Activated CD8-positive, alpha-beta T cell treated with anti-CD3 and anti-CD28 coated beads for 36 hours (primary cell): ENCODE measurements at regions of chr12 and their contacts with region 1.

Region 1: GRCh38 chr12:52327052-52327829 is 6.0 kb upstream of the KRT83 start:
- DNase-seq: peak; percentile 87
- ATAC-seq: peak; percentile 98
- H3K4me3 Mint-ChIP-seq: no peak overlapping the region
- H3K27ac Mint-ChIP-seq: no peak overlapping the region
- H3K4me1 Mint-ChIP-seq: peaks cover 12% of the 10 kb centered on the region
- H3K27me3 Mint-ChIP-seq: peaks cover 6% of the 10 kb centered on the region
- CTCF ChIP-seq: peak; percentile 53

Region 2: GRCh38 chr12:51923501-51924271 is 403.6 kb before region 1 on chr12:
- CTCF ChIA-PET with region 1: no interaction called
- POLR2A ChIA-PET with region 1: no interaction called
- intact Hi-C with region 1: no loop called
- DNase-seq: peak; percentile 73
- ATAC-seq: peak; percentile 89
- H3K4me3 Mint-ChIP-seq: no peak overlapping the region
- H3K27ac Mint-ChIP-seq: no peak overlapping the region
- H3K4me1 Mint-ChIP-seq: peaks cover 6% of the 10 kb centered on the region
- H3K27me3 Mint-ChIP-seq: no peaks in the 10 kb centered on the region
- CTCF ChIP-seq: peak; percentile 91

Region 3: GRCh38 chr12:52156736-52157565 is 170.3 kb before region 1 on chr12:
- CTCF ChIA-PET with region 1: interaction called, 36 read pairs
- POLR2A ChIA-PET with region 1: no interaction called
- intact Hi-C with region 1: loop called (anchors 5 kb)
- DNase-seq: peak; percentile 81
- ATAC-seq: peak; percentile 64
- H3K4me3 Mint-ChIP-seq: no peak overlapping the region
- H3K27ac Mint-ChIP-seq: no peak overlapping the region
- H3K4me1 Mint-ChIP-seq: peaks cover 17% of the 10 kb centered on the region
- H3K27me3 Mint-ChIP-seq: no peaks in the 10 kb centered on the region
- CTCF ChIP-seq: peak; percentile 97

Region 4: GRCh38 chr12:52202361-52203074 is 124.7 kb before region 1 on chr12:
- CTCF ChIA-PET with region 1: no interaction called
- POLR2A ChIA-PET with region 1: no interaction called
- intact Hi-C with region 1: no loop called
- DNase-seq: peak; percentile 6
- ATAC-seq: peak; percentile 41
- H3K4me3 Mint-ChIP-seq: no peak overlapping the region
- H3K27ac Mint-ChIP-seq: no peak overlapping the region
- H3K4me1 Mint-ChIP-seq: peaks cover 6% of the 10 kb centered on the region
- H3K27me3 Mint-ChIP-seq: peaks cover 8% of the 10 kb centered on the region
- CTCF ChIP-seq: no peak

Region 5: DNA sequence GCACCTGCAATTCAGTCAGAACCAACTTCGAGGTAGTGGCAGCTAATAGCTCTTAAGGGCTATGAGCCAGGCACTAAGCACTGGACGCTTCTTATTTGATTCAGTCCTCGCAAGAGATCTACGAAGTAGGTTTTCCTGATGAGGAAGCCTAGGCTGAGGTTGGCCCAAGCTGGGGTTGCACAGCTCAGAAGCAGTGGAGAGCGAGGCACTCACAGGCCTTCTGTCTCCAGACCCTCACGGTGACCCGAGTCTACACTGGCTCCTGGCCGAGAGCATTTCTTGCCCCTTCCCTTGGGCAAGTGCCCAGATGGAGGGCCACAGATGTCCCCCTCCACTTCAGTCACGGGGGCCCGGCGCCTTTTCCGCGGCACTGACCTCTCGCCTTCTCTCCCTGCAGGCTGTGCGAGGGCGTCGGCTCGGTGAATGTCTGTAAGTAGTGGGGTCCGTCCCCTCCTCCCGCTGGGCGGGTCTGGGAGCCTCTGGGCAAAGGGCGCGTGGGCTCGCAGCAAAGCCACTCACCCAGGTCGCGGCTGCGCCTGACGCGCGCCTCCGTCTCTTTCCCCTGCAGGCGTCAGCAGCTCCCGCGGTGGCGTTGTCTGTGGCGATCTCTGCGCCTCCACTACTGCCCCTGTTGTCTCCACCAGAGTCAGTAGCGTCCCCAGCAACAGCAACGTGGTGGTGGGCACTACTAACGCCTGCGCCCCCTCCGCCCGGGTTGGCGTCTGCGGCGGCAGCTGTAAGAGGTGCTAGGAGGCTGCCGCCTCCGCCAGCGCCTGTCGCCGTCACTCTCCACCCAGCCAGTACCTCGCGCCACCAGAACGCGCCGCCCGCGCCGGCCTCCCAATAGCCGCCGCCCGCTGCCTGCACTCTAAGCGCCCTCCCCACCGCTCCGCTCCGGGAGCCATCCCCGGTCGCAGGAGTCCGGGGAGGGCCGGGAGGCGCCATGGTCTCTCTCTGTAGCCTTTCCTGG is 19.1 kb before region 1 on chr12:
- CTCF ChIA-PET with region 1: interaction called, 28 read pairs
- POLR2A ChIA-PET with region 1: no interaction called
- intact Hi-C with region 1: no loop called
- DNase-seq: peak; percentile 67
- ATAC-seq: peak; percentile 88
- H3K4me3 Mint-ChIP-seq: peak overlapping the region; percentile 22
- H3K27ac Mint-ChIP-seq: no peak overlapping the region
- H3K4me1 Mint-ChIP-seq: peaks cover 15% of the 10 kb centered on the region
- H3K27me3 Mint-ChIP-seq: peaks cover 54% of the 10 kb centered on the region
- CTCF ChIP-seq: peak; percentile 25

Region 6: GRCh38 chr12:52314511-52314910 is 12.7 kb before region 1 on chr12:
- CTCF ChIA-PET with region 1: interaction called, 28 read pairs
- POLR2A ChIA-PET with region 1: no interaction called
- intact Hi-C with region 1: no loop called
- DNase-seq: no peak
- ATAC-seq: no peak
- H3K4me3 Mint-ChIP-seq: no peak overlapping the region
- H3K27ac Mint-ChIP-seq: no peak overlapping the region
- H3K4me1 Mint-ChIP-seq: no peaks in the 10 kb centered on the region
- H3K27me3 Mint-ChIP-seq: peaks cover 21% of the 10 kb centered on the region
- CTCF ChIP-seq: no peak

Region 7: DNA sequence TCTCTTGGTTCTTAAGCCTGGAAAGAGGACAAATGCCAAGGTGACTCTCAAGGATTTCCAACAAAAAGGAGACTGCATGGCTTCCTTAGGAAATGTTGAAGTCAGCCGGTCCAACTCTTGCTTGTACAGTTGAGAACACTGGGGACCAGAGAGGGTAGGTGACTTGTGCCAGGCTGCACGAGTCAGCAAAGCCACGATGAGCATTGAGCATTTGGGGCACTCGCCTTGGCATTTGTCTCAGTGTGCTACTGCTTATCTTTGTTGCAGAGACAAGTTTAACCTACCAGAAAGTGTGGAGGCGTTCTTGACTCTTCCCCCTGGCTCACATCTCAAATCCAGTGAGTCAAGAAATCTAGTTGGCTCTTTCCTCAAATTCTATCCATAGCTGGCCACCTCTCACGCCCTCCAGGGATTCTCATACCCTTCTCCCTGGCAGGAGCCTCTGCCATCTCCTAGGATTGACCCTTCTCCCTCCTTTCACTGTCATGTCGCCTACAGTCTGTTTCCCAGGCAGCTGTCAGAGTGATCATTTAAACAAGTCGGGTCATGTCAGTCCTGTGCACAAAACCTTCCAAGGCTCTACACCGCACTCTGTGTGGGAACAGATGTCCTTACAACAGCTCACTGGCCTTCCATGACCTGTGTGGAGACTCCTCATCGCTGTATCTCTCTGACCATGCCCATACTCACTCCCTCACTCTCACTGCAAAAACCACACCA is 11.2 kb after region 1 on chr12:
- CTCF ChIA-PET with region 1: interaction called, 14 read pairs
- POLR2A ChIA-PET with region 1: no interaction called
- intact Hi-C with region 1: no loop called
- DNase-seq: no peak
- ATAC-seq: no peak
- H3K4me3 Mint-ChIP-seq: no peak overlapping the region
- H3K27ac Mint-ChIP-seq: no peak overlapping the region
- H3K4me1 Mint-ChIP-seq: peaks cover 8% of the 10 kb centered on the region
- H3K27me3 Mint-ChIP-seq: peaks cover 4% of the 10 kb centered on the region
- CTCF ChIP-seq: no peak

Region 8: DNA sequence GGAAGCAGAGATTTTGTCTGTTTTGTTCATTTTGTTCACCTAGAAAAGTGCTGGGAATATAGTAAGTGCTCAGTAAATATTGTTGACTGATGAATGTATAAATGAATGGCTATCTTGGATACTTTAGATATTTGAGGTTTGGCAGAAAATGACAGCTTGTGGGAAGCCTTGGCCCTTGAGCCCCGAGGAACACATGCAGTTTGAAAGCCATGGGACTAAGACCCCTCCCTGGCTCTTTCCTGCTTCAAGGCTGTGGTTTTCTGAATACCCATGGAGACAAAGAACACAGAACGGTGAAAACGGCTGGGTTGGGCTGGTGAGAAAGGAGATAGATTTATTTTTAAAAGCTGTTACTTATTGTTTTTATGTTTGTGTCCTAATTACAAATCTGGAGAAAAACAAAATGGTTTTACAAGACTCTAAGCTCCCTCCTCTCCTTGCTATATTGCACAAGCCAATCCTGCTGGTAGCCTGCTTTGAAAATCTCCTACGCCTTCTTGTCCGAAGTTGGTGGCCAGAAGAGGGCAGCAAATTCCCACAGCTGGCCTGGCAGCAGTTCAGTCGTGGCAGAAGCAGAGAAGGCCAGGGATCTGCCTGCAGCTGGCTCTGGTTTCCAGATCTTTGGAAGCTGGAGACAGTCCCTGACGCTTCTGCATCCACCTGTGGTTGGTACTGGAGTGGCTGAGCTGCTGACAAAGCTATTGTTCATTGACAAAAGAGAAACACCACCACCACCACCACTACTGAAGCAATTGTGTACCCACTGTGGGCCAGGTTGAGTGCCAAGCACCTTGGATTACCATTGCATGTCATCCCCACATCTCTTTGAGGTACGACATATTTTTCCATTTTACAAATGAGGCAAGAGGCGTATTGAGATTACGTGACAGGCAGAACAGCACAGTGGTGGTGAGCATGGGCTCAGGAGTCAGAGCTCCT is 45.2 kb after region 1 on chr12:
- CTCF ChIA-PET with region 1: interaction called, 12 read pairs
- POLR2A ChIA-PET with region 1: no interaction called
- intact Hi-C with region 1: no loop called
- DNase-seq: peak; percentile 73
- ATAC-seq: peak; percentile 56
- H3K4me3 Mint-ChIP-seq: no peak overlapping the region
- H3K27ac Mint-ChIP-seq: no peak overlapping the region
- H3K4me1 Mint-ChIP-seq: no peaks in the 10 kb centered on the region
- H3K27me3 Mint-ChIP-seq: peaks cover 3% of the 10 kb centered on the region
- CTCF ChIP-seq: peak; percentile 50